ENCODE measurements at regions of chr14 and their contacts with region 1.

Region 1: DNA sequence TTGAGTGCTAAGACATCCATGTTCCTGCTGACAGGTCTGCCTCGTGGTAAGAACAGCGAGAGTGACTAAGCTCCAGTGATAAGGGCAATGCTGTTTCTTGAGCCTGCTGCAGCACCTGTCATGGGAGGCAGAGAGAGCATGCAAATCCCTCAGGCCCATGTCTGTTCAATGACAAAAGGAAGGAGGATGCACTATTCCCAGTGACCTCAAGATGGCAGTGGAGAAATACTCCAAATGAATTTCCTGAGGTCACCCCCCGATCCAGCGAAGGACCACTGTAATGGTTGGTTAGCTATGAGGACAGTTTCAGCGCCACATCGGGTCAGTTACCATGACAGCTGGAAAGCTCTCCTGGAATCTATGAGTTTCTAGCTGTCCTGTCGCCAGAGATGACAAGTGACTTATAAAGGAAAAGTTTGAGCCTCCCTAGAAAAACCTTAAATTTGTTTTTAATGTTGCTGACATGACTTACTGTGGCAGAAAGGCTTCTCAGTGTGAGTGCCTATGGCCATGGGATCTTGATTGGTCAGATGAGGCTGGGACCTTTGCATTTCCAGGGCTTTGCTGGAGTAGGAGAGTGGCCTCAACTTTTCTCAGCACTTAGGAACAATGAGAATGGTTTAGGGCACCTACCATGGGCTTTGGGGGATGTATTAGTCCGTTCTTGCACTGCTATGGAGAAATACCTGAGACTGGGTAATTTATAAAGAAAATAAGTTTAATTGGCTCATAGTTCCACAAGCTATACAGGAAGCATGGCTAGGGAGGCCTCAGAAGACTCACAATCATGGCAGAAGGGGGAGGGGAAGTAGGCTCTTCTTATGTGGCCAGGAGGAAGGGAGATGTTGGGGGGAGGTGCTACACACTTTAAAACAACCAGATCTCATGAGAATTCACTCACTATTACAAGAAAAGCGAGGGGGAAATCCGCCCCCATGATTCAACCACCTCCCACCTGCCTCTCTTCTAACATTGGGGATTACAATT is 88.0 kb upstream of the TMEM260 start:
- DNase-seq: peak; percentile 45
- H3K4me3 Mint-ChIP-seq: no peak overlapping the region
- H3K27ac Mint-ChIP-seq: no peak overlapping the region
- H3K4me1 Mint-ChIP-seq: peaks cover 10% of the 10 kb centered on the region
- H3K27me3 Mint-ChIP-seq: no peaks in the 10 kb centered on the region

Region 2: GRCh38 chr14:55212634-55213033 is 1279.0 kb before region 1 on chr14:
- CTCF ChIA-PET with region 1: no interaction called
- intact Hi-C with region 1: loop called (anchors 10 kb)
- DNase-seq: no peak
- H3K4me3 Mint-ChIP-seq: no peak overlapping the region
- H3K27ac Mint-ChIP-seq: no peak overlapping the region
- H3K4me1 Mint-ChIP-seq: peaks cover 4% of the 10 kb centered on the region
- H3K27me3 Mint-ChIP-seq: no peaks in the 10 kb centered on the region

Region 3: GRCh38 chr14:56555921-56556570 is 64.5 kb after region 1 on chr14:
- CTCF ChIA-PET with region 1: interaction called, 10 read pairs
- intact Hi-C with region 1: no loop called
- DNase-seq: no peak
- H3K4me3 Mint-ChIP-seq: no peak overlapping the region
- H3K27ac Mint-ChIP-seq: no peak overlapping the region
- H3K4me1 Mint-ChIP-seq: no peaks in the 10 kb centered on the region
- H3K27me3 Mint-ChIP-seq: peaks cover 8% of the 10 kb centered on the region

Region 4: DNA sequence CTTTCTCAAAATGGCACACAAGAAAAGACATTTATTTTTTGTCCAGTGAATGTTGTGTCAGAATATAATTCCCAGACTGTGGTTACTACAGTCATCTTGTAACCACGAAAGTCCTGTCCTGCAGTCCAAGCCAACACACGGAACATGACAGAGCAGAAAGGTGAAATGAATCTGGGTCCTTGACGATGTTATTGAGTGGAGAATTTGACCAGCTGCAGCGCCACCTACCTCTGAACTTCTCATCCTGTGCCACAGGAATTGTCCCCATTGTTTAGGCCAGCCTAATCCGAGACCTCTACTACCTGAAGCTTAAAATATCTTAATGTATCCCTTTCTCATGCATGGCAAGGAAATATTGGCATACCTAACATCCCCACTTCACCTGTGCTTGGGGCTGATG is 382.8 kb after region 1 on chr14:
- CTCF ChIA-PET with region 1: interaction called, 3 read pairs
- intact Hi-C with region 1: loop called (anchors 10 kb)
- DNase-seq: peak; percentile 20
- H3K4me3 Mint-ChIP-seq: no peak overlapping the region
- H3K27ac Mint-ChIP-seq: no peak overlapping the region
- H3K4me1 Mint-ChIP-seq: no peaks in the 10 kb centered on the region
- H3K27me3 Mint-ChIP-seq: peaks cover 24% of the 10 kb centered on the region

Region 5: GRCh38 chr14:57182760-57183503 is 691.3 kb after region 1 on chr14:
- CTCF ChIA-PET with region 1: interaction called, 9 read pairs
- intact Hi-C with region 1: loop called (anchors 2 kb)
- DNase-seq: no peak
- H3K4me3 Mint-ChIP-seq: no peak overlapping the region
- H3K27ac Mint-ChIP-seq: no peak overlapping the region
- H3K4me1 Mint-ChIP-seq: no peaks in the 10 kb centered on the region
- H3K27me3 Mint-ChIP-seq: peaks cover 6% of the 10 kb centered on the region

Region 6: GRCh38 chr14:57317316-57317715 is 825.7 kb after region 1 on chr14:
- CTCF ChIA-PET with region 1: interaction called, 10 read pairs
- intact Hi-C with region 1: loop called (anchors 1 kb)
- DNase-seq: peak; percentile 85
- H3K4me3 Mint-ChIP-seq: no peak overlapping the region
- H3K27ac Mint-ChIP-seq: no peak overlapping the region
- H3K4me1 Mint-ChIP-seq: peaks cover 5% of the 10 kb centered on the region
- H3K27me3 Mint-ChIP-seq: peaks cover 4% of the 10 kb centered on the region